HEK293 (cell line): ENCODE measurements at regions of chr3 and their contacts with region 1.

Region 1: GRCh38 chr3:45656575-45657363 is 32.4 kb upstream of the SACM1L start:
- H3K4me3 ChIP-seq: no peak overlapping the region
- H3K27ac ChIP-seq: no peak overlapping the region
- H3K4me1 ChIP-seq: no peaks in the 10 kb centered on the region; the same call in 1 of the 2 replicates
- CTCF ChIP-seq: peak; percentile 73

Region 2: GRCh38 chr3:45043728-45044299 is 613.0 kb before region 1 on chr3:
- CTCF ChIA-PET with region 1: interaction called, 12 read pairs
- POLR2A ChIA-PET with region 1: no interaction called
- H3K4me3 ChIP-seq: no peak overlapping the region
- H3K27ac ChIP-seq: no peak overlapping the region
- H3K4me1 ChIP-seq: no peaks in the 10 kb centered on the region
- CTCF ChIP-seq: no peak

Region 3: DNA sequence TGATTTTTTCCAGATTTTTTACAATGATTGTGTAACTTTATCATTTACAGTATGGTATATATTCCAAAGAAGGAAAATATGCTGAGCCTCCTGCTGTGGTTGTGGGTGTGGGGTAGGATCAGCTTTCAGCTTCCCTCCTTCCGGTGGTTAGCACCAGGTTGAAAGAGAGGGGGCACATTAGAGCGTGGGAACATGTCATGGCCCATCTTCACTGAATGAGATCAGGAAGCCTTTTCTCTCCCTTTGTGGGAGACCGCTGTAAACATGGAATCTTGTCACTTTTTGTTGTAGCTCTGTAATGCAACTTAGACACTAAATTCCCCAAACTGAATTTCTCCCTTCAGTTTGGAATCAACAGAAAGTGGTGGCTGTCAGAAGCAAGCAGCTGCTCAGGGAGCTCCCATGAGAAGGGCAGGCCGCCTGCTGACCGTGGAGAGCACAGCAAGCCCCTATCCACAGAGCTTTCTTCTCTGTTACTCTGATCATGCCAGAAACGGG is 148.9 kb before region 1 on chr3:
- CTCF ChIA-PET with region 1: interaction called, 36 read pairs
- POLR2A ChIA-PET with region 1: interaction called, 5 read pairs
- H3K4me3 ChIP-seq: no peak overlapping the region
- H3K27ac ChIP-seq: no peak overlapping the region
- H3K4me1 ChIP-seq: peaks cover 3% of the 10 kb centered on the region; the same call in 1 of the 2 replicates
- CTCF ChIP-seq: peak; percentile 37; the same call in 1 of the 2 replicates

Region 4: DNA sequence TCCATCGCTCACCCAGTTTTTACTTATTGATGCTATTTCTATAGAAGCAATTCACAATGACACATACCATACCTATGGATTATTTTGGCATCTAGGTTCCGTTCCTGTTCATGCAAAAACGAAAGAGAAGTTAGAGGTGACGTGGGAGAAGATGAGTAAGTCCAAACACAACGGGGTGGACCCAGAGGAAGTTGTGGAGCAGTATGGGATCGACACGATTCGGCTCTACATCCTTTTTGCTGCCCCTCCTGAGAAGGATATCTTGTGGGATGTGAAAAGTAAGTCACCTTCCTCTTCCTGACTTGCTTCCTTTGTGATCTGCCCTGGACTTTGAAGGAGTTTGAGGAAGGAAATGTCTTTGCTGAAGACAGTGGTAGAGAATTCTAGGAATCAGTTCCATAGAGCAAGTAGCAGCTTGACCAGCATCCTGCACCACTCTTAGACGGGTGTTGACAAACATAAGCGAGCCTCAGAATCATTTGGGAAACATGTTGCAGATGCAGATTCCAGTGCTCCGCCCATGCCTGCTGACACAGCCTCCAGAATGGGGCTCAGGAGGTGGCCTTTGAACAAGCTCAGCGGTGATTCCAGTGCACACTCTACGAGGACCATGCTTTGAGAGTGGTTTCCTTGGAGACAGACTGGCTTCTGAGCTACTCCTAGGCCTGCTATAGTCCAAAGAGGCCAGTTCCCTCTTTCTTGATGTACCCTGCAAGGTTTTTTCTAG is 140.6 kb before region 1 on chr3:
- CTCF ChIA-PET with region 1: interaction called, 36 read pairs
- POLR2A ChIA-PET with region 1: interaction called, 5 read pairs
- H3K4me3 ChIP-seq: no peak overlapping the region
- H3K27ac ChIP-seq: no peak overlapping the region
- H3K4me1 ChIP-seq: no peaks in the 10 kb centered on the region
- CTCF ChIP-seq: no peak

Region 5: GRCh38 chr3:45546716-45547701 is 109.8 kb before region 1 on chr3:
- CTCF ChIA-PET with region 1: interaction called, 15 read pairs
- POLR2A ChIA-PET with region 1: no interaction called
- H3K4me3 ChIP-seq: no peak overlapping the region
- H3K27ac ChIP-seq: no peak overlapping the region
- H3K4me1 ChIP-seq: no peaks in the 10 kb centered on the region
- CTCF ChIP-seq: no peak

Region 6: GRCh38 chr3:45590822-45591541 is 65.8 kb before region 1 on chr3:
- CTCF ChIA-PET with region 1: interaction called, 10 read pairs
- POLR2A ChIA-PET with region 1: no interaction called
- H3K4me3 ChIP-seq: no peak overlapping the region
- H3K27ac ChIP-seq: no peak overlapping the region
- H3K4me1 ChIP-seq: no peaks in the 10 kb centered on the region
- CTCF ChIP-seq: no peak

Region 7: GRCh38 chr3:45666757-45667431 is 10.1 kb after region 1 on chr3:
- CTCF ChIA-PET with region 1: interaction called, 11 read pairs
- POLR2A ChIA-PET with region 1: no interaction called
- H3K4me3 ChIP-seq: no peak overlapping the region
- H3K27ac ChIP-seq: no peak overlapping the region
- H3K4me1 ChIP-seq: no peaks in the 10 kb centered on the region
- CTCF ChIP-seq: no peak